Esophagus muscularis mucosa (tissue), 4 donors: ENCODE measurements at regions of chr22 and their contacts with region 1.

Region 1: GRCh38 chr22:29830585-29830984 is 7.5 kb downstream of the ASCC2 start:
- DNase-seq: no peak
- H3K4me3 ChIP-seq: no peak overlapping the region
- H3K27ac ChIP-seq: no peak overlapping the region
- H3K4me1 ChIP-seq: peaks cover 0 to 11% (median 4%) of the 10 kb centered on the region in 4 donors
- H3K27me3 ChIP-seq: no peaks in the 10 kb centered on the region
- CTCF ChIP-seq: no peak
- EP300 ChIP-seq: no peak
- POLR2A ChIP-seq: no peak

Region 2: GRCh38 chr22:29658176-29658575 is 172.4 kb before region 1 on chr22:
- intact Hi-C with region 1: no loop called
- DNase-seq: no peak
- H3K4me3 ChIP-seq: no peak overlapping the region
- H3K27ac ChIP-seq: no peak overlapping the region
- H3K4me1 ChIP-seq: peaks cover 0 to 6% (median 0%) of the 10 kb centered on the region in 4 donors
- H3K27me3 ChIP-seq: no peaks in the 10 kb centered on the region
- CTCF ChIP-seq: no peak
- EP300 ChIP-seq: no peak
- POLR2A ChIP-seq: no peak

Region 3: GRCh38 chr22:29892315-29893156 is 62.0 kb after region 1 on chr22:
- intact Hi-C with region 1: no loop called
- DNase-seq: no peak
- H3K4me3 ChIP-seq: no peak overlapping the region
- H3K27ac ChIP-seq: no peak overlapping the region
- H3K4me1 ChIP-seq: peaks cover 17 to 38% (median 34%) of the 10 kb centered on the region in 4 donors
- H3K27me3 ChIP-seq: no peaks in the 10 kb centered on the region
- CTCF ChIP-seq: no peak
- EP300 ChIP-seq: no peak
- POLR2A ChIP-seq: no peak

Region 4: GRCh38 chr22:29987137-29987536 is 156.6 kb after region 1 on chr22:
- intact Hi-C with region 1: loop called (anchors 5 kb)
- DNase-seq: no peak
- H3K4me3 ChIP-seq: no peak overlapping the region
- H3K27ac ChIP-seq: no peak overlapping the region
- H3K4me1 ChIP-seq: no peaks in the 10 kb centered on the region
- H3K27me3 ChIP-seq: no peaks in the 10 kb centered on the region
- CTCF ChIP-seq: no peak
- EP300 ChIP-seq: no peak
- POLR2A ChIP-seq: no peak